Heart left ventricle (tissue), 16 donors: ENCODE measurements at regions of chr1 and their contacts with region 1.

Region 1: DNA sequence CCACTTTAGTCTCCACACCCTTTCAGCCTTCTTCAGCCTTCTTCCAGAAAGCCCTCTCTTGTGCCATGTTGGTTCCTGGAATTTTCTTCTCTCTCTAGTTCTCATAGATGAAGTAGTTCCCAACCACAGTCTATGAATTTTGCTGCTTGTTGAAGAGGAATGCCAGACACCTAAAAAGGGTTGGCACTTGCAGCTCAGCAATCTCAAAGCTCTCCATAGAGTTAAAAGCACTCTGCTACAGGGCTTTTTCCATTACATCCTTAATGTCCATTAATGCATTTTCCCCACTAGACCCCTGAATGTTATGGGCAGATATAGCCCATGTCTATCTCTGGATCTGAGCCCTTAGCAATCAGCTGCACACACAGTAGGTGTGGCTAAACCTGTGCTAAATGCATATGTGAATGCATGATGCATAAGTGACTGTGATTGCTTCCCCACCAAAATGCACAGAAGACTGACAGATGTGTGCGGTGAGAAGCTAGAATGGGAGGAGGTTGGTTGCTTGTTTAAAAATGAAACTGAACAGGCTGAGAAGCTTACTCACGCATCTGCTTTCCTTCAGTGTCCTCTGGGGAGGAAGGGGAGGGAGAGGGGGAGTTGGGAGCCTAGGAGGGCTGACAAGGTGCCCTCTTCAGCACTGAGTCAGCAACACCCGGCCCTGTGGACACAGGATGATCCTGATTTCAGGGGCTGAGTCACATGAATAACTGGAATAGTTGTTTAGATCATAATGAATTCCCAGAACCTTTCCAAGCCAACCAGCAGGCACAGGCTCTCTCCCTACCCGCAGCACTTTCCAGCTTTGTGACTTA is 146.1 kb upstream of the FGGY start:
- DNase-seq: peak; percentile 73 to 95 (median 78)
- ATAC-seq: peak; percentile 88 to 98 (median 96)
- H3K4me3 ChIP-seq: peak overlapping the region in 8 of 12 donors; percentile 16 to 45 (median 28)
- H3K27ac ChIP-seq: peak overlapping the region; percentile 19 to 94 (median 88)
- H3K4me1 ChIP-seq: peaks cover 0 to 49% (median 30%) of the 10 kb centered on the region in 12 donors
- H3K27me3 ChIP-seq: no peaks in the 10 kb centered on the region
- CTCF ChIP-seq: no peak
- POLR2A ChIP-seq: no peak

Region 2: DNA sequence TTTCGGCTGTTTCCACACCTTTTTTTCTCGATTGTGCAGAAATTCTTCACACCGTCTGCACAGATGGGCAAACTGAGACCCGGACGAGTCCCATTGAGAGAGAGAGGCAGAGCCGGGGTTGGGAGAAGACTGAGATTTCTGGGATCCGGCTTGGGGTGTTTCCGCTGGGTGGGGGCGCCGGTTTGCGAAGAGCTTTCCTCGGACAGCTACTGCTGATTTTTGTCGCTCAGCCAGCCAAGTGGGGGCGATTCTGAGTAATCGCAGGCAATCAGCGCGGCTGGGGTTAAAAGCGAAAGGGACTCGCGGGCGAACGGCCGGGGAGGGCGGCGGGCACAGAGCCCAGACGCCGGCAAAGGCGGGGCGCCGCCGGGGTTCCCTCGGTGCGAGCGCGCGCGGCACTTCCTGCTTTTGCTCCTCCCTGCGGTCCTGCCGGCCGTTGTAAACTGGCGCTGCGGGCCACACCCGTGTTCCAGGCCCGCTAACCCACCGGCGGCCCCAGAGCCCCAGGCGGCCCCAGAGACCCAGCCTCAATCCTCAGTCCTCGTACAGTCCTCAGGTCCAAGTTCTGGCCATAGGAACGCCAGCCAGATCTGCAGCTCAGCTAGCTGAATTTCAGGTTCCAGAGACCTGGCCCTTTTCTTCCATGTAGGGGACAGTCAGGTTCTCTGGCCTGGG is 334.6 kb before region 1 on chr1:
- intact Hi-C with region 1: loop called in 1 of 10 experiments (anchors 10 kb)
- DNase-seq: peak; percentile 92 to 96 (median 94)
- ATAC-seq: peak; percentile 80 to 93 (median 90)
- H3K4me3 ChIP-seq: peak overlapping the region; percentile 32 to 71 (median 64)
- H3K27ac ChIP-seq: peak overlapping the region; percentile 87 to 96 (median 92)
- H3K4me1 ChIP-seq: peaks cover 0 to 59% (median 20%) of the 10 kb centered on the region in 12 donors
- H3K27me3 ChIP-seq: no peaks in the 10 kb centered on the region
- CTCF ChIP-seq: peak in 3 of 12 donors; percentile 19 to 30 (median 26)
- POLR2A ChIP-seq: peak in 1 of 2 donors; percentile 55

Region 3: GRCh38 chr1:59013276-59013927 is 137.4 kb before region 1 on chr1:
- intact Hi-C with region 1: loop called in 1 of 10 experiments (anchors 10 kb)
- DNase-seq: peak; percentile 33 to 65 (median 46)
- ATAC-seq: peak; percentile 40 to 77 (median 69)
- H3K4me3 ChIP-seq: peak overlapping the region in 5 of 12 donors; percentile 4 to 34 (median 23)
- H3K27ac ChIP-seq: peak overlapping the region; percentile 68 to 88 (median 80)
- H3K4me1 ChIP-seq: peaks cover 6 to 51% (median 24%) of the 10 kb centered on the region in 12 donors
- H3K27me3 ChIP-seq: no peaks in the 10 kb centered on the region
- CTCF ChIP-seq: no peak
- POLR2A ChIP-seq: no peak

Region 4: DNA sequence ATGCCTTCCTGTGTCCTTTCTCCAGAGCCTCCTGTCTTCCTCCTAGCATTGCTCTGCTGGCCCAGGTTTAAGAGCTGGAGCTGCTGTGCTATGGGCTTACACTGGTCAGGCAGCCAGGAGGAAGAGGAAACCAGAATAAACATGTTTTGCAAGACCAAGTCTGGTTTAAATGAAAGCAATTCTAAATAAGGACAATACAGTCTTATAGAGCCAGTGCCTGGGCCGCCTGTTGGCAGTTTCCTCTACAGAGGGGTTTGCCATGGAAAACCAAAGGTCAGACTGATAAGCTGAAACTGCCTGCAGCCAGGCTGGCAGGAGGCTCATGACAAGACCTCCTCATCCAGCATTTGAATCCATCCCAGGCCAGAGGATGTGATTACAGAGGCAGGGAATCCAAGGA is 53.2 kb after region 1 on chr1:
- intact Hi-C with region 1: loop called in 1 of 10 experiments (anchors 10 kb)
- DNase-seq: peak; percentile 27 to 76 (median 64)
- ATAC-seq: peak; percentile 73 to 98 (median 92)
- H3K4me3 ChIP-seq: no peak overlapping the region
- H3K27ac ChIP-seq: peak overlapping the region in 11 of 12 donors; percentile 24 to 69 (median 50)
- H3K4me1 ChIP-seq: peaks cover 0 to 22% (median 12%) of the 10 kb centered on the region in 12 donors
- H3K27me3 ChIP-seq: no peaks in the 10 kb centered on the region
- CTCF ChIP-seq: peak in 1 of 12 donors; percentile 10
- POLR2A ChIP-seq: no peak

Region 5: GRCh38 chr1:59393211-59394180 is 242.7 kb after region 1 on chr1:
- intact Hi-C with region 1: loop called in 1 of 10 experiments (anchors 10 kb)
- DNase-seq: peak; percentile 76 to 87 (median 85)
- ATAC-seq: peak; percentile 96 to 98 (median 98)
- H3K4me3 ChIP-seq: peak overlapping the region in 3 of 12 donors; percentile 4 to 10 (median 5)
- H3K27ac ChIP-seq: peak overlapping the region; percentile 67 to 95 (median 88)
- H3K4me1 ChIP-seq: peaks cover 0 to 39% (median 24%) of the 10 kb centered on the region in 12 donors
- H3K27me3 ChIP-seq: no peaks in the 10 kb centered on the region
- CTCF ChIP-seq: no peak
- POLR2A ChIP-seq: no peak

Region 6: DNA sequence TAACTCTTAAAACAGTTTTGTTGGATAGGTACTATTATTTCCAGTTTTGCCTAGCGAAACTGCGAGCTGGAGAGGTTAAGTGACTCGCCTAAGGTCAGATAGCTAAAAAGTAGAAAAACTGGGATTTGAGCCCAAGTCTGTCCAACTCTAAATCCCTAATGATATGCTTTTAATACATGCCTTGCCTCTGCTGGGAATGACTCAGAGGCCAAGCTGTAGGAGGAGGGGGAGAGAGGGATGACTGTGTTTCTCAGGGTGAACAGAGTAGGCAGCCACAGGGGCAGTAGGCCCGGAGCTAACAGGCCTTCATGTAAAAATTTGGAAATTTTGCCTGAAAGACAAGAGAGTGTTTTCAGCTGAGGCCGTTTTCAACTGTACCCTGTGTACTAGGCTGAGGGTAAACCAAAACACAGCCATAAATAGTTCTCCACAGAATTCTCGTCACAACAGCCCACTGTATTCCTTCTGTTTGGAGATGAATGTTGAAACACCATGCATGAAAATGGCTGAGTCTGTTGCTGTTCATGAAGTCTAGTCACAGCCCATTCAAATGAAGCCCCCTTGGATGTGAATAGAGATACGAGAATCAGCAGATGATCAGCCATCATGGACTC is 556.5 kb after region 1 on chr1:
- intact Hi-C with region 1: loop called in 2 of 10 experiments (anchors 5 to 10 kb)
- DNase-seq: peak in 4 of 5 donors; percentile 34 to 76 (median 62)
- ATAC-seq: peak; percentile 53 to 92 (median 86)
- H3K4me3 ChIP-seq: no peak overlapping the region
- H3K27ac ChIP-seq: peak overlapping the region in 11 of 12 donors; percentile 17 to 72 (median 53)
- H3K4me1 ChIP-seq: peaks cover 0 to 60% (median 36%) of the 10 kb centered on the region in 12 donors
- H3K27me3 ChIP-seq: no peaks in the 10 kb centered on the region
- CTCF ChIP-seq: no peak
- POLR2A ChIP-seq: no peak